A673 (cell line): ENCODE measurements at regions of chr5 and their contacts with region 1.

Region 1: GRCh38 chr5:37837414-37838032 is 2.3 kb downstream of the GDNF start:
- DNase-seq: peak; percentile 93
- H3K4me3 ChIP-seq: peak overlapping the region; percentile 59
- H3K27ac ChIP-seq: peak overlapping the region; percentile 84
- H3K4me1 ChIP-seq: peaks cover 46% of the 10 kb centered on the region
- H3K27me3 ChIP-seq: no peaks in the 10 kb centered on the region
- CTCF ChIP-seq: peak; percentile 88

Region 2: GRCh38 chr5:37412515-37413277 is 424.8 kb before region 1 on chr5:
- CTCF ChIA-PET with region 1: interaction called, 5 read pairs
- POLR2A ChIA-PET with region 1: no interaction called
- intact Hi-C with region 1: loop called (anchors 5 kb)
- DNase-seq: peak; percentile 91
- H3K4me3 ChIP-seq: no peak overlapping the region
- H3K27ac ChIP-seq: no peak overlapping the region
- H3K4me1 ChIP-seq: peaks cover 6% of the 10 kb centered on the region
- H3K27me3 ChIP-seq: no peaks in the 10 kb centered on the region
- CTCF ChIP-seq: peak; percentile 98

Region 3: DNA sequence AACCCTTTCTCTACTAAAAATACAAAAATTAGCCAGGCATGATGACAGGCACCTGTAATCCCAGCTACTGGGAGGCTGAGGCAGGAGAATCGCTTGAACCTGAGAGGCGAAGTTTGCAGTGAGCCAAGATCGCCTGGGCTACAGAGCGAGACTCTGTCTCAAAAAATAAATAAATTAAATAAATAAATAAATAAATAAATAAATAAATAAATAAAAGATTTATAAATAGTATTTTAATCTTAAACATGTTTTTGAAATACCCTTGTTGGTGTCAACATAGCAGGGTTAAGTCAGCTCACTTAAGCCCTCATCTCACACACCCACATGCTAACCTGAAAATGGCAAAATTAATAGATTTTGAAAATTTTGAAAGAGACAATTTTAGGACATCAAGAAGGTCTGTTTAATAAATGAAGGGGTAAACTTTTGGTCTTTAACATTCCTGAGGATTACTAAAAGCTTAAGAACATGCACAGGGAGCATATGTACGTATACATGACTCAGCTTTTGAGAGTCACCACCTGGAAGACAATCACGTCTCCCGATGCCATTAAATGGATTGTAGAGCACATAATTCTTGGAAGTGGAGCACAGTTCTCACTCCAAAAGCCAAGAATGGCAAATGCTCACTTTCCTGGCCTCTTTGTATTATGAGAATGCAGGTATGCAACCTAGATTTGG is 200.2 kb before region 1 on chr5:
- CTCF ChIA-PET with region 1: no interaction called
- POLR2A ChIA-PET with region 1: no interaction called
- intact Hi-C with region 1: no loop called
- DNase-seq: no peak
- H3K4me3 ChIP-seq: no peak overlapping the region
- H3K27ac ChIP-seq: no peak overlapping the region
- H3K4me1 ChIP-seq: no peaks in the 10 kb centered on the region
- H3K27me3 ChIP-seq: no peaks in the 10 kb centered on the region
- CTCF ChIP-seq: no peak

Region 4: GRCh38 chr5:37722236-37723146 is 115.0 kb before region 1 on chr5:
- CTCF ChIA-PET with region 1: no interaction called
- POLR2A ChIA-PET with region 1: no interaction called
- intact Hi-C with region 1: loop called (anchors 2 kb)
- DNase-seq: peak; percentile 85
- H3K4me3 ChIP-seq: peak overlapping the region; percentile 21
- H3K27ac ChIP-seq: peak overlapping the region; percentile 93
- H3K4me1 ChIP-seq: peaks cover 75% of the 10 kb centered on the region
- H3K27me3 ChIP-seq: no peaks in the 10 kb centered on the region
- CTCF ChIP-seq: no peak

Region 5: DNA sequence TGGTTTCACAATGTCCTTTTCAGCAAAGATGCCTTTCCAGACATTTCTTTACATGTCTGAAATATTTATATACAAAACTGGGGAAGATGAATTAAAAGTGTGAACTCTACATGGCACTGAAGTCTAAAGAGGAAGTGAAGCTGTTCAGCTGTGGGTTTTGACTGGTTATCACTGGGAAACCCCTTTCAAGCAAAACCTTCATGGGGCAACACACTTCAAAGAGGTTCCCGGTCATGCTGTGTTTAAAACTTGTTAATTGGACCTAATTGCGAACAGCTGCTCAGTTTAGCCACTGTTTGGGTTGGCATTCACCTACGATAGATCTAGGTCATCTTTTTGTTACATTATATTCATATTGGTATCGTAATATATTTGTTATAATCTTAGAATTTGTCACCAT is 22.3 kb after region 1 on chr5:
- CTCF ChIA-PET with region 1: no interaction called
- POLR2A ChIA-PET with region 1: interaction called, 15 read pairs
- intact Hi-C with region 1: no loop called
- DNase-seq: no peak
- H3K4me3 ChIP-seq: no peak overlapping the region
- H3K27ac ChIP-seq: no peak overlapping the region
- H3K4me1 ChIP-seq: no peaks in the 10 kb centered on the region
- H3K27me3 ChIP-seq: no peaks in the 10 kb centered on the region
- CTCF ChIP-seq: no peak

Region 6: DNA sequence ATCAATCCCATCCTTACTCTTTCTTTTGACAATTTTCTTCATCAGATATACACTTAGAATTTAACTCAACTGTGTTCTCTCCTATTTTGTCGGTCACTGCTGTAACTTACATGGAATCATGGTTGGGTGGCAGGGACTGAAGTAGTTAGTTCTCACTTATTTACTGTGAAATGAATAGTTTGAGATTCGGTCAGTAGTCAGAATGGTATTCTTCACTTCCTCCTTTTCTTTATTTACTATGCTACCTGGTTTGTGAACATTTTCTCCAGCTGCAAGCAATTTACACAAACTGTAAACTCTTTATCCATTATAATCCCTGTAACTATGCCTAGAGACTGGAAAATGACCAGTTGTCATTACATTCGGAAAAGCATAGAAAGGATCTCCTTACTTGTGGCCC is 43.8 kb after region 1 on chr5:
- CTCF ChIA-PET with region 1: no interaction called
- POLR2A ChIA-PET with region 1: no interaction called
- intact Hi-C with region 1: no loop called
- DNase-seq: no peak
- H3K4me3 ChIP-seq: no peak overlapping the region
- H3K27ac ChIP-seq: no peak overlapping the region
- H3K4me1 ChIP-seq: peaks cover 3% of the 10 kb centered on the region
- H3K27me3 ChIP-seq: no peaks in the 10 kb centered on the region
- CTCF ChIP-seq: no peak

Region 7: GRCh38 chr5:38011668-38012188 is 174.2 kb after region 1 on chr5:
- CTCF ChIA-PET with region 1: no interaction called
- POLR2A ChIA-PET with region 1: no interaction called
- intact Hi-C with region 1: no loop called
- DNase-seq: no peak
- H3K4me3 ChIP-seq: no peak overlapping the region
- H3K27ac ChIP-seq: no peak overlapping the region
- H3K4me1 ChIP-seq: no peaks in the 10 kb centered on the region
- H3K27me3 ChIP-seq: peaks cover 13% of the 10 kb centered on the region
- CTCF ChIP-seq: no peak

Region 8: DNA sequence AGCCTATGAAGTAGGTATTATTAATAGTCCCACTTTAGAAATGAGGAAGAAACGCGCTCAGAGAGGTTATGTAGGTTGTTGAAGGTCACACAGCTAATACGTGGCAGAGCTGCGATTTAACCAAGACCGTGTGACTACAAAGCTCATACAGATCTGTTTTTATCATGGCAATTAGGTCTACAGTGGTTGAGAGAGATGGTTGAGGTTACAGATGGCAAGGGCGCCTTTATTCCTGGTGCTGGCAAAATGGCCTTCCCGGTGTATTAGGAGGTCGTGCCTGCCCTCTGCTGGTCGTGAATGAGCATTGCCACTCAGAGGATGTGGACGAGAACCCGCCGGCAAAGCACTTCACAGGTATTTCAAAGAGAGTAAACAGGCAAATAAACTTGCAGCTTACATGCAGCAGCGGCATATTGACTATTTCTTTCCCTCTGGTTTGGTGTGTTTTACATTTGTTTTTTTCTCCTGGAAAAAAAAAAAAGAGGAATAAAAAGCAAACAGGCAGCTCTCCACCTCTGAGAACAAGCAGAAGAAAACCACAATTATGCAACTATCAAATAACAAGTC is 355.6 kb after region 1 on chr5:
- CTCF ChIA-PET with region 1: interaction called, 7 read pairs
- POLR2A ChIA-PET with region 1: no interaction called
- intact Hi-C with region 1: loop called (anchors 1 kb)
- DNase-seq: peak; percentile 81
- H3K4me3 ChIP-seq: no peak overlapping the region
- H3K27ac ChIP-seq: no peak overlapping the region
- H3K4me1 ChIP-seq: no peaks in the 10 kb centered on the region
- H3K27me3 ChIP-seq: no peaks in the 10 kb centered on the region
- CTCF ChIP-seq: peak; percentile 94

Region 9: DNA sequence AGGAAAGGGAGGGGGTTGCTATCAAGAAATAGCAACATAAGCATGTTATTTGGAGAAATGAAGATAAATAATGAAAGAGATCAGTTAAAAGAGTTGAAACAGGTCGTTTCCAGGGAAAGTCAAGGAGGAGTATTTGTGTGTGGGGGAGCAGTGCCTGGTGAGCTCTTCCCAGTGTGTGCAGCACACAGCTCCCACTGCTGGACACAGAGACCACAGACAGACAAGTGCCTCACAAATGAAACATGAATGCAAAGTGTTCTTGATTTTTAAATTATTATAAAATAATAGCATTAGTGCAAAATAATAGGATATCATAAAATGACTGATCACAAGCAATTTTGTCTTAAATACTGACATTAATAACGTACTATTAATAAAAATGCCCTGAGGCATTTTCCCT is 678.1 kb after region 1 on chr5:
- CTCF ChIA-PET with region 1: interaction called, 14 read pairs
- POLR2A ChIA-PET with region 1: no interaction called
- intact Hi-C with region 1: no loop called
- DNase-seq: no peak
- H3K4me3 ChIP-seq: no peak overlapping the region
- H3K27ac ChIP-seq: no peak overlapping the region
- H3K4me1 ChIP-seq: no peaks in the 10 kb centered on the region
- H3K27me3 ChIP-seq: no peaks in the 10 kb centered on the region
- CTCF ChIP-seq: peak; percentile 54